ENCODE measurements at regions of chr17 and their contacts with region 1.

Region 1: DNA sequence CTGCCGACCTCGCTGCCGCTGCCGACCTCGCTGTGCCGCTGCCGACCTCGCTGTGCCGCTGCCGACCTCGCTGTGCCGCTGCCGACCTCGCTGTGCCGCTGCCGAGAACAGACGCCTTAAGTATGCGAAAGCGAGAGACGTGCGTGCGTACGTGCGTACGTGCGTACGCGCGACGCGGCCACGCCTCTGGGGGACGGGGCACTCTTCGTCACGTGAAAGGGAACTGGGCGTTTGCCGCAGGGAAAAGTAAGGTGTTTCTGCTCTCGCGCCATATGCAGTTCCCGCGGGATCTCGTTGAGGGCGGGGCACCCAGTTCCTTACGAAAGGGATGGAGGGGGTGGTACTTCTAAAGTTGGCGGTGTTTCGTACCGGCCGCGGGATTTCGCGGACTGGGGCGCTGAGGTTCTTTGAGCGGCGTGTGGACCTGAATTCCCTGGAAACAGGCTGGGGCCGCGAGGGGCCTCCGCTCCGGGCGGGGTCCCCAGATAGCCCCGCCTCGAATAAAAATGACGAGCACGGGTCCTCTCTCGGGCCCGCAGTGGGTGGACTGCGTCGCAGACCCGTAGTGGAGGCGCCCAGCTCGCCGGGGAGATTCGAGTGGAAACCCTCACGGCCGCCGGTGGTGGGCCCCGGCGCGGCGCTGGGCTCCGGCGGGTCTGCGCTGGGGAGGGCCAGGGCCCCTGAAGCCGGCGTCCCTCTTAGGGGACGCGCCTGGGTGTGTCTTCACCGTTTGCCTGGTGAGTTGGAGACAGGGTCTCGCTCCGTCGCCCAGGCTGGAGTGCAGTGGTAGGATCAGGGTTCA is at the start of gene EIF4A3:
- DNase-seq: peak; percentile 92 to 100 (median 96)
- ATAC-seq: peak; percentile 91
- H3K4me3 ChIP-seq: peak within 1 kb of the TSS; percentile 85 to 96
- H3K4me3 Mint-ChIP-seq: peak within 1 kb of the TSS; percentile 98
- H3K27ac ChIP-seq: peak within 1 kb of the TSS; percentile 87 to 96
- H3K27ac Mint-ChIP-seq: peak within 1 kb of the TSS; percentile 95
- H3K4me1 ChIP-seq: peaks cover 30% of the 10 kb centered on the region
- H3K4me1 Mint-ChIP-seq: peaks cover 47% of the 10 kb centered on the region
- H3K27me3 ChIP-seq: no peaks in the 10 kb centered on the region
- H3K27me3 Mint-ChIP-seq: no peaks in the 10 kb centered on the region
- CTCF ChIP-seq: no peak
- total RNA-seq, gene EIF4A3: 121 to 123 TPM

Region 2: GRCh38 chr17:79777894-79778503 is 369.2 kb before region 1 on chr17 and contains the start of gene CBX2:
- CTCF ChIA-PET with region 1: no interaction called
- POLR2A ChIA-PET with region 1: no interaction called
- intact Hi-C with region 1: loop called in 1 of 2 experiments (anchors 5 kb)
- DNase-seq: peak; percentile 60 to 89 (median 75)
- ATAC-seq: peak; percentile 86
- H3K4me3 ChIP-seq: peak within 1 kb of the TSS; percentile 36 to 44
- H3K4me3 Mint-ChIP-seq: peak within 1 kb of the TSS; percentile 83
- H3K27ac ChIP-seq: no peak within 1 kb of the TSS
- H3K27ac Mint-ChIP-seq: no peak within 1 kb of the TSS
- H3K4me1 ChIP-seq: peaks cover 34% of the 10 kb centered on the region
- H3K4me1 Mint-ChIP-seq: peaks cover 34% of the 10 kb centered on the region
- H3K27me3 ChIP-seq: peaks cover 20 to 21% of the 10 kb centered on the region in 2 experiments
- H3K27me3 Mint-ChIP-seq: peaks cover 45% of the 10 kb centered on the region
- CTCF ChIP-seq: no peak
- total RNA-seq, gene CBX2: 0.14 to 0.56 TPM

Region 3: GRCh38 chr17:80035943-80036714 is 111.1 kb before region 1 on chr17 and contains the start of gene CCDC40:
- CTCF ChIA-PET with region 1: no interaction called
- POLR2A ChIA-PET with region 1: no interaction called
- intact Hi-C with region 1: loop called in 1 of 2 experiments (anchors 5 kb)
- DNase-seq: peak; percentile 66 to 93 (median 79)
- ATAC-seq: peak; percentile 79
- H3K4me3 ChIP-seq: peak within 1 kb of the TSS; percentile 64 to 86
- H3K4me3 Mint-ChIP-seq: peak within 1 kb of the TSS; percentile 89
- H3K27ac ChIP-seq: peak within 1 kb of the TSS; percentile 75 to 80
- H3K27ac Mint-ChIP-seq: peak within 1 kb of the TSS; percentile 49
- H3K4me1 ChIP-seq: peaks cover 12% of the 10 kb centered on the region
- H3K4me1 Mint-ChIP-seq: peaks cover 13% of the 10 kb centered on the region
- H3K27me3 ChIP-seq: peaks cover 0 to 6% of the 10 kb centered on the region in 2 experiments
- H3K27me3 Mint-ChIP-seq: peaks cover 10% of the 10 kb centered on the region
- CTCF ChIP-seq: peak; percentile 25
- total RNA-seq, gene CCDC40: 1.0 to 1.2 TPM

Region 4: DNA sequence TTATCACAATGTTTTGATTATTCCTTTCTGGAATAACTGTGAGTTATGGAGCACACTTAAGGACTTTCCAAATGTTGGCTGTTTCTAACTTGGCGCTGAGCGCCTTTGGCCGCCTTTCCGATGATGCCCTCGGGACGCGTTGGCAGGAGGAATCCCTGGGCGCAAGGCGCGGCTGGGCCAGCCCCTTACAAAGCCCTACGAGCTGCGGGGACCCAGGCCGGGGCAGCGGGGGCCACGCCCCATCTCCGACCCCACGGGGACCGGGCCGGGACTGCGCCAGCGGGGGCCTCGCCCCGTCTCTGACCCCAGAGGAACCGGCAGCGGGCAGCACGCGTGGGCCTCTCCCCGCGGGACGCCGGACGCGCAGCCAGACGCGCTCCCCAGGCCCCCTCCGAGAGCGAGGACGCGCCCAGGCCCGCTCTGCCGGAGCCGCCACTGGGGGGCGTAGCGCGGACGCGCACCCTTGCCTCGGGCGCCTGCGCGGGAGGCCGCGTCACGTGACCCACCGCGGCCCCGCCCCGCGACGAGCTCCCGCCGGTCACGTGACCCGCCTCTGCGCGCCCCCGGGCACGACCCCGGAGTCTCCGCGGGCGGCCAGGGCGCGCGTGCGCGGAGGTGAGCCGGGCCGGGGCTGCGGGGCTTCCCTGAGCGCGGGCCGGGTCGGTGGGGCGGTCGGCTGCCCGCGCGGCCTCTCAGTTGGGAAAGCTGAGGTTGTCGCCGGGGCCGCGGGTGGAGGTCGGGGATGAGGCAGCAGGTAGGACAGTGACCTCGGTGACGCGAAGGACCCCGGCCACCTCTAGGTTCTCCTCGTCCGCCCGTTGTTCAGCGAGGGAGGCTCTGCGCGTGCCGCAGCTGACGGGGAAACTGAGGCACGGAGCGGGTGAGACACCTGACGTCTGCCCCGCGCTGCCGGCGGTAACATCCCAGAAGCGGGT is 46.0 kb before region 1 on chr17 and contains the start of gene GAA:
- CTCF ChIA-PET with region 1: interaction called, 10 read pairs
- POLR2A ChIA-PET with region 1: interaction called, 8 read pairs
- intact Hi-C with region 1: loop called in 1 of 2 experiments (anchors 1 kb)
- DNase-seq: peak; percentile 77 to 95 (median 87)
- ATAC-seq: peak; percentile 90
- H3K4me3 ChIP-seq: peak within 1 kb of the TSS; percentile 91 to 92
- H3K4me3 Mint-ChIP-seq: peak within 1 kb of the TSS; percentile 88
- H3K27ac ChIP-seq: peak within 1 kb of the TSS; percentile 61 to 69
- H3K27ac Mint-ChIP-seq: peak within 1 kb of the TSS; percentile 74
- H3K4me1 ChIP-seq: peaks cover 23% of the 10 kb centered on the region
- H3K4me1 Mint-ChIP-seq: peaks cover 32% of the 10 kb centered on the region
- H3K27me3 ChIP-seq: no peaks in the 10 kb centered on the region
- H3K27me3 Mint-ChIP-seq: peaks cover 2% of the 10 kb centered on the region
- CTCF ChIP-seq: peak; percentile 69
- total RNA-seq, gene GAA: 21.3 to 22.6 TPM

Region 5: GRCh38 chr17:80219013-80219762 is 72.0 kb after region 1 on chr17:
- CTCF ChIA-PET with region 1: no interaction called
- POLR2A ChIA-PET with region 1: no interaction called
- intact Hi-C with region 1: loop called (anchors 1 to 2 kb)
- DNase-seq: peak; percentile 84 to 97 (median 95)
- ATAC-seq: peak; percentile 89
- H3K4me3 ChIP-seq: peak overlapping the region; percentile 94 to 96
- H3K4me3 Mint-ChIP-seq: peak overlapping the region; percentile 91
- H3K27ac ChIP-seq: peak overlapping the region; percentile 86 to 91
- H3K27ac Mint-ChIP-seq: peak overlapping the region; percentile 96
- H3K4me1 ChIP-seq: peaks cover 32% of the 10 kb centered on the region
- H3K4me1 Mint-ChIP-seq: peaks cover 36% of the 10 kb centered on the region
- H3K27me3 ChIP-seq: no peaks in the 10 kb centered on the region
- H3K27me3 Mint-ChIP-seq: no peaks in the 10 kb centered on the region
- CTCF ChIP-seq: no peak

Region 6: GRCh38 chr17:80254396-80255251 is 107.4 kb after region 1 on chr17:
- CTCF ChIA-PET with region 1: interaction called, 3 read pairs
- POLR2A ChIA-PET with region 1: no interaction called
- intact Hi-C with region 1: loop called (anchors 2 kb)
- DNase-seq: peak in 5 of 9 experiments; percentile 33 to 75 (median 54)
- ATAC-seq: peak; percentile 34
- H3K4me3 ChIP-seq: no peak overlapping the region
- H3K4me3 Mint-ChIP-seq: no peak overlapping the region
- H3K27ac ChIP-seq: peak overlapping the region in 1 of 2 experiments; percentile 51
- H3K27ac Mint-ChIP-seq: peak overlapping the region; percentile 85
- H3K4me1 ChIP-seq: peaks cover 7% of the 10 kb centered on the region
- H3K4me1 Mint-ChIP-seq: peaks cover 28% of the 10 kb centered on the region
- H3K27me3 ChIP-seq: no peaks in the 10 kb centered on the region
- H3K27me3 Mint-ChIP-seq: no peaks in the 10 kb centered on the region
- CTCF ChIP-seq: no peak

Measured in CD8-positive, alpha-beta T cell (primary cell).